ENCODE measurements at regions of chr6 and their contacts with region 1.

Region 1: GRCh38 chr6:142946181-142946923 is 1.4 kb upstream of the HIVEP2 start:
- DNase-seq: peak; percentile 74 to 98 (median 87)
- ATAC-seq: peak; percentile 65
- H3K4me3 ChIP-seq: peak overlapping the region; percentile 92
- H3K4me3 Mint-ChIP-seq: peak overlapping the region; percentile 94 to 99 (median 96)
- H3K27ac ChIP-seq: peak overlapping the region; percentile 100
- H3K27ac Mint-ChIP-seq: peak overlapping the region; percentile 75 to 100 (median 98)
- H3K4me1 ChIP-seq: peaks cover 21 to 27% of the 10 kb centered on the region in 2 donors
- H3K4me1 Mint-ChIP-seq: peaks cover 30 to 44% (median 41%) of the 10 kb centered on the region in 7 donors
- H3K27me3 ChIP-seq: no peaks in the 10 kb centered on the region
- H3K27me3 Mint-ChIP-seq: peaks cover 0 to 7% (median 0%) of the 10 kb centered on the region in 5 donors

Region 2: GRCh38 chr6:142146828-142147662 is 799.3 kb before region 1 on chr6 and contains the starts of genes NMBR and VTA1:
- CTCF ChIA-PET with region 1: no interaction called
- POLR2A ChIA-PET with region 1: no interaction called
- intact Hi-C with region 1: loop called (anchors 1 to 5 kb)
- DNase-seq: peak; percentile 81 to 98 (median 97)
- ATAC-seq: peak; percentile 99
- H3K4me3 ChIP-seq: peak within 1 kb of the TSS; percentile 95
- H3K4me3 Mint-ChIP-seq: peak within 1 kb of the TSS; percentile 88 to 98 (median 95)
- H3K27ac ChIP-seq: peak within 1 kb of the TSS; percentile 75
- H3K27ac Mint-ChIP-seq: peak within 1 kb of the TSS; percentile 80 to 98 (median 94)
- H3K4me1 ChIP-seq: peaks cover 22 to 25% of the 10 kb centered on the region in 2 donors
- H3K4me1 Mint-ChIP-seq: peaks cover 36 to 73% (median 65%) of the 10 kb centered on the region in 7 donors
- H3K27me3 ChIP-seq: no peaks in the 10 kb centered on the region
- H3K27me3 Mint-ChIP-seq: peaks cover 0 to 2% (median 0%) of the 10 kb centered on the region in 5 donors
- total RNA-seq, gene NMBR: not detected
- total RNA-seq, gene VTA1: 13.6 to 41.3 (median 32.6) TPM

Region 3: GRCh38 chr6:142746524-142746923 is 199.8 kb before region 1 on chr6:
- CTCF ChIA-PET with region 1: interaction called, 3 read pairs
- POLR2A ChIA-PET with region 1: no interaction called
- intact Hi-C with region 1: loop called (anchors 1 to 2 kb)
- DNase-seq: peak in 7 of 9 donors; percentile 16 to 49 (median 31)
- ATAC-seq: peak; percentile 69
- H3K4me3 ChIP-seq: no peak overlapping the region
- H3K4me3 Mint-ChIP-seq: no peak overlapping the region
- H3K27ac ChIP-seq: no peak overlapping the region
- H3K27ac Mint-ChIP-seq: peak overlapping the region in 2 of 9 donors; percentile 26 to 60
- H3K4me1 ChIP-seq: no peaks in the 10 kb centered on the region
- H3K4me1 Mint-ChIP-seq: peaks cover 0 to 30% (median 17%) of the 10 kb centered on the region in 7 donors
- H3K27me3 ChIP-seq: no peaks in the 10 kb centered on the region
- H3K27me3 Mint-ChIP-seq: peaks cover 0 to 4% (median 0%) of the 10 kb centered on the region in 5 donors

Region 4: GRCh38 chr6:142885182-142885867 is 61.0 kb before region 1 on chr6:
- CTCF ChIA-PET with region 1: no interaction called
- POLR2A ChIA-PET with region 1: interaction called, 7 read pairs
- intact Hi-C with region 1: loop called (anchors 1 kb)
- DNase-seq: peak; percentile 28 to 91 (median 83)
- ATAC-seq: peak; percentile 92
- H3K4me3 ChIP-seq: peak overlapping the region; percentile 44
- H3K4me3 Mint-ChIP-seq: peak overlapping the region; percentile 78 to 98 (median 94)
- H3K27ac ChIP-seq: peak overlapping the region; percentile 84
- H3K27ac Mint-ChIP-seq: peak overlapping the region; percentile 76 to 100 (median 99)
- H3K4me1 ChIP-seq: peaks cover 52 to 62% of the 10 kb centered on the region in 2 donors
- H3K4me1 Mint-ChIP-seq: peaks cover 45 to 99% (median 94%) of the 10 kb centered on the region in 7 donors
- H3K27me3 ChIP-seq: no peaks in the 10 kb centered on the region
- H3K27me3 Mint-ChIP-seq: no peaks in the 10 kb centered on the region

Region 5: GRCh38 chr6:142926494-142927270 is 19.7 kb before region 1 on chr6:
- CTCF ChIA-PET with region 1: interaction called, 6 read pairs
- POLR2A ChIA-PET with region 1: interaction called, 203 read pairs
- intact Hi-C with region 1: loop called (anchors 1 kb)
- DNase-seq: peak; percentile 62 to 87 (median 84)
- ATAC-seq: peak; percentile 88
- H3K4me3 ChIP-seq: peak overlapping the region; percentile 87
- H3K4me3 Mint-ChIP-seq: peak overlapping the region; percentile 88 to 99 (median 96)
- H3K27ac ChIP-seq: peak overlapping the region; percentile 100
- H3K27ac Mint-ChIP-seq: peak overlapping the region; percentile 93 to 100 (median 100)
- H3K4me1 ChIP-seq: peaks cover 35 to 40% of the 10 kb centered on the region in 2 donors
- H3K4me1 Mint-ChIP-seq: peaks cover 20 to 75% (median 68%) of the 10 kb centered on the region in 7 donors
- H3K27me3 ChIP-seq: no peaks in the 10 kb centered on the region
- H3K27me3 Mint-ChIP-seq: no peaks in the 10 kb centered on the region

Region 6: DNA sequence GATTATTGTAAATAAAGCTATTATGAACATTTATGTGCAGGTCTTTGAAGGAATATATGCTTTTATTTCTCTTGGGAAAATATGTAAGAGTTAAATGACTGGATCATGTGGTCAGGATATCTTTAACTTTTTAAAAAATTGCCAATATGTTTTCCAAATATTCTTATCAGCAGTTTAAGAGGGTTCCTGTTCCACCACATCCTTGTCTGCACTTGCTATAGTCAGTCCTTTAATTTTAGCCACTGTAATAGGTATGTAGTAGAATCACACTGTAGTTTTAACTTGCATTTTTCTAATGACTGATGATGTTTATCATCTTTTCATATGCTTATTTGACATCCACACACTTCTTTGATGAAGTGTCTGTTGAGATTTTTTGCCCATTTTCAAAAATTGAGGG is 22.2 kb after region 1 on chr6:
- CTCF ChIA-PET with region 1: no interaction called
- POLR2A ChIA-PET with region 1: no interaction called
- intact Hi-C with region 1: no loop called
- DNase-seq: no peak
- ATAC-seq: no peak
- H3K4me3 ChIP-seq: no peak overlapping the region
- H3K4me3 Mint-ChIP-seq: no peak overlapping the region
- H3K27ac ChIP-seq: no peak overlapping the region
- H3K27ac Mint-ChIP-seq: no peak overlapping the region
- H3K4me1 ChIP-seq: no peaks in the 10 kb centered on the region
- H3K4me1 Mint-ChIP-seq: peaks cover 0 to 1% (median 0%) of the 10 kb centered on the region in 7 donors
- H3K27me3 ChIP-seq: no peaks in the 10 kb centered on the region
- H3K27me3 Mint-ChIP-seq: no peaks in the 10 kb centered on the region

Region 7: DNA sequence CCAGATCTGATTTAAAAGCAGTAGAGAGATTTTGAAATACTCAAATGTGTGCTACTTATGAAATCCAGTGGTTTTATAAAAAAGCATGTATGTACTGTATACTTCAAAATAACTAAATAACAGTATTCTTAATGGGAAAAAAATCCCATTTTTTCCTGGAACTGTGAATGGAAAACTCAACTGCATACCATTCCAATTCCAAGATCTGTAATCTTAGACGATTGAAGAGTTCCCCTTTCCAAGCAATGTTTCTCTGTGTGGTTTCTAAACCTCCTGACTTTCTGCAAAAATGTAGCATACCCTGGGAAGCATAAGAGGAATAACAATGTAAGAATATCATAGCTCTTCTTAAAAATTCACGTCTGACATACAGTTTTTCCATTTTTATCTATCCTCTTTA is 38.9 kb after region 1 on chr6:
- CTCF ChIA-PET with region 1: no interaction called
- POLR2A ChIA-PET with region 1: no interaction called
- intact Hi-C with region 1: no loop called
- DNase-seq: no peak
- ATAC-seq: no peak
- H3K4me3 ChIP-seq: no peak overlapping the region
- H3K4me3 Mint-ChIP-seq: no peak overlapping the region
- H3K27ac ChIP-seq: no peak overlapping the region
- H3K27ac Mint-ChIP-seq: no peak overlapping the region
- H3K4me1 ChIP-seq: no peaks in the 10 kb centered on the region
- H3K4me1 Mint-ChIP-seq: no peaks in the 10 kb centered on the region
- H3K27me3 ChIP-seq: no peaks in the 10 kb centered on the region
- H3K27me3 Mint-ChIP-seq: peaks cover 0 to 3% (median 0%) of the 10 kb centered on the region in 5 donors

Region 8: GRCh38 chr6:143450453-143451371 is 504.4 kb after region 1 on chr6 and contains the starts of genes ADAT2 and PEX3:
- CTCF ChIA-PET with region 1: no interaction called
- POLR2A ChIA-PET with region 1: no interaction called
- intact Hi-C with region 1: loop called in 1 of 2 experiments (anchors 1 kb)
- DNase-seq: peak; percentile 87 to 95 (median 94)
- ATAC-seq: peak; percentile 98
- H3K4me3 ChIP-seq: peak within 1 kb of the TSS; percentile 89
- H3K4me3 Mint-ChIP-seq: peak within 1 kb of the TSS; percentile 84 to 100 (median 99)
- H3K27ac ChIP-seq: peak within 1 kb of the TSS; percentile 80
- H3K27ac Mint-ChIP-seq: peak within 1 kb of the TSS; percentile 93 to 99 (median 96)
- H3K4me1 ChIP-seq: peaks cover 14 to 18% of the 10 kb centered on the region in 2 donors
- H3K4me1 Mint-ChIP-seq: peaks cover 20 to 61% (median 49%) of the 10 kb centered on the region in 7 donors
- H3K27me3 ChIP-seq: no peaks in the 10 kb centered on the region
- H3K27me3 Mint-ChIP-seq: no peaks in the 10 kb centered on the region
- total RNA-seq, gene ADAT2: 18.4 to 25.8 (median 20.8) TPM
- total RNA-seq, gene PEX3: 10.9 to 28.8 (median 19.1) TPM

Region 9: DNA sequence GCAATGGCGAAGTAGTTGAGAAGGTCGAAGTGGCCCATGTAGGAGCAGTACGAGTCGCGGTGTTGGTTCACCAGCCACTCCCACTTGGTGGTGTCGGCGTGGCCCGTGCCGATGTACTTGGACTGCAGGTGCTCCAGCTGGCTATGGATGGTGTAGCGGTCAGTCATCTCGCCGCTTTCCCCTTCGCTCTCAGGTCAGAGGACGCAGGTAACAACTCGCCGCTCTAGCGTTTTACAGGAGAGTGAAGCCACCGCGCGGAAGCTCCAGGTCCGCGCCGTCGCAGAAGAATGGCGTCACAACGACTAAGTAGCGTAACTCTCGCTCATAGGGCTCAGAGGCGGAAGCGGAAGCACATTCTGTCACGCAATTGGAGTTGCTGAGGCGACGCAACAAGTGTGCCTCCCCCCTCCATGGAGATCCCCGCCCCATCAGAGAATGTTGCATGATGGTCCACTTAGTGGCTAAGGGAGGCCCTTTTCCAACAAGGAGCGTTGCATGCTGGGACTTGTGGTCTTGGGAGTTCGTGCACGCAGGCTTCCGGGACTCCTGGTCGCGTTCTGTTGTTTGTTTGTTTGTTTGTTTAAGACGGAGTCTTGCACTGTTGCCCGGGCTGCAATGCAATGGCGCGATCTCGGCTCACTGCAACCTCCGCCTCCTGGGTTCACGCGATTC is 1149.1 kb after region 1 on chr6 and contains the start of gene SF3B5:
- CTCF ChIA-PET with region 1: no interaction called
- POLR2A ChIA-PET with region 1: no interaction called
- intact Hi-C with region 1: loop called in 1 of 2 experiments (anchors 2 kb)
- DNase-seq: peak; percentile 86 to 99 (median 97)
- ATAC-seq: peak; percentile 98
- H3K4me3 ChIP-seq: peak within 1 kb of the TSS; percentile 98
- H3K4me3 Mint-ChIP-seq: peak within 1 kb of the TSS; percentile 93 to 100 (median 98)
- H3K27ac ChIP-seq: peak within 1 kb of the TSS; percentile 92
- H3K27ac Mint-ChIP-seq: peak within 1 kb of the TSS; percentile 96 to 100 (median 98)
- H3K4me1 ChIP-seq: peaks cover 13 to 14% of the 10 kb centered on the region in 2 donors
- H3K4me1 Mint-ChIP-seq: peaks cover 15 to 38% (median 32%) of the 10 kb centered on the region in 7 donors
- H3K27me3 ChIP-seq: no peaks in the 10 kb centered on the region
- H3K27me3 Mint-ChIP-seq: peaks cover 0 to 10% (median 0%) of the 10 kb centered on the region in 5 donors
- total RNA-seq, gene SF3B5: 89.2 to 155 (median 122) TPM